ENCODE measurements at regions of chr9 and their contacts with region 1.

Region 1: GRCh38 chr9:129737479-129738274 is 15.2 kb downstream of the PTGES start:
- DNase-seq: peak; percentile 76 to 93 (median 85)
- ATAC-seq: peak; percentile 92
- H3K4me3 ChIP-seq: peak overlapping the region; percentile 76
- H3K4me3 Mint-ChIP-seq: peak overlapping the region; percentile 69
- H3K27ac ChIP-seq: peak overlapping the region; percentile 13 to 59
- H3K27ac Mint-ChIP-seq: peak overlapping the region; percentile 24
- H3K4me1 ChIP-seq: peaks cover 16% of the 10 kb centered on the region
- H3K4me1 Mint-ChIP-seq: no peaks in the 10 kb centered on the region
- H3K27me3 ChIP-seq: peaks cover 0 to 4% of the 10 kb centered on the region in 2 experiments
- H3K27me3 Mint-ChIP-seq: peaks cover 4% of the 10 kb centered on the region
- CTCF ChIP-seq: peak; percentile 96

Region 2: GRCh38 chr9:129641746-129642513 is 95.7 kb before region 1 on chr9 and contains the start of gene ASB6:
- CTCF ChIA-PET with region 1: no interaction called
- POLR2A ChIA-PET with region 1: no interaction called
- intact Hi-C with region 1: loop called in 1 of 2 experiments (anchors 5 kb)
- DNase-seq: peak; percentile 78 to 94 (median 89)
- ATAC-seq: peak; percentile 71
- H3K4me3 ChIP-seq: peak within 1 kb of the TSS; percentile 98
- H3K4me3 Mint-ChIP-seq: peak within 1 kb of the TSS; percentile 87
- H3K27ac ChIP-seq: peak within 1 kb of the TSS; percentile 66 to 74
- H3K27ac Mint-ChIP-seq: peak within 1 kb of the TSS; percentile 85
- H3K4me1 ChIP-seq: peaks cover 35% of the 10 kb centered on the region
- H3K4me1 Mint-ChIP-seq: peaks cover 11% of the 10 kb centered on the region
- H3K27me3 ChIP-seq: no peaks in the 10 kb centered on the region
- H3K27me3 Mint-ChIP-seq: no peaks in the 10 kb centered on the region
- CTCF ChIP-seq: peak; percentile 100
- total RNA-seq, gene ASB6: 28.5 to 29.3 TPM

Region 3: DNA sequence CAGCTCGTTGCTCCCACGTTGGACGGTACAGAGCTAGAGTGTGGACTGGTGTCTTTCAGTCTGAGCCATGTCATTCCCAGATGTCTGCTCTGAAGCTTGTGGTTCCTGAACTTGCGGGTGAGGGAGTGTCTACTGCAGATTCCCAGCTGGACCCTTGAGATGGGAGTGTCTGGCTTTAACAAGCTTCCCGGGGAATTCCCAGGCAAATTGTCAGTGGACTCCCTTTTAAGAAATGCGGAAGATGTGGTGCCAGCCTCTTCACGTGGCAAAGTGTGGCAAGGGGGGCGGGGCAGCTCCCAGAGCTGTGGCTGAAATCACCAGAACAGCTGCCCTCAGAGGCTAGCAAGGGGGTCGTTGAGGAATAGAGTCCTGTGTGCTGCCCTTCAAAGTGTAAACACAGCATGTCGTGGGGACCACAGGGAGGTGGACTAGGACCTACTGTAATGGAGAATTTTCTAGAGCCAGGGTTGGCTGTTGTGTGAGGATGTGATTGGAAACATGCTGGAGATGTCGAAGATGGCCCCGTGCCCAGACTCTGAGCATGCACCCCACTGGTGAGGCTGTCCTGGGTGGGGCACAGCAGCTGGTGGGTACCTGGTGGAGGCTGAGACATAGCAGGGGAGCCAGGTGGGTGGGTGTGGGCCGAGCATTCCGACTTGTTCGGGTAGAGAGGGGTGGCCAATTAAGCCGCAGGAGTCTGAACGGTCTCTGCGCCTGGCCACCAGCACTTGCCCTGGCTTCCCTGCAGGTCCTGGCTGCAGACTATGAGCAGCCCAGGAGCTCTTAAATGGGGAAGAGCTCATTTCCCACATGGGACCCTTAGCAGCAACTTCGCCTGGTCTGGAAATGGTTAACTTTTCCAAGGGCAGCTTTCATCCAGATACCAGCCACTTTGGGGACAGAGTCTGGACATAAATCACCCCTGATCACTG is 34.8 kb before region 1 on chr9:
- CTCF ChIA-PET with region 1: no interaction called
- POLR2A ChIA-PET with region 1: no interaction called
- intact Hi-C with region 1: no loop called
- DNase-seq: no peak
- ATAC-seq: no peak
- H3K4me3 ChIP-seq: no peak overlapping the region
- H3K4me3 Mint-ChIP-seq: no peak overlapping the region
- H3K27ac ChIP-seq: no peak overlapping the region
- H3K27ac Mint-ChIP-seq: no peak overlapping the region
- H3K4me1 ChIP-seq: no peaks in the 10 kb centered on the region
- H3K4me1 Mint-ChIP-seq: no peaks in the 10 kb centered on the region
- H3K27me3 ChIP-seq: peaks cover 12 to 16% of the 10 kb centered on the region in 2 experiments
- H3K27me3 Mint-ChIP-seq: peaks cover 37% of the 10 kb centered on the region
- CTCF ChIP-seq: no peak

Region 4: DNA sequence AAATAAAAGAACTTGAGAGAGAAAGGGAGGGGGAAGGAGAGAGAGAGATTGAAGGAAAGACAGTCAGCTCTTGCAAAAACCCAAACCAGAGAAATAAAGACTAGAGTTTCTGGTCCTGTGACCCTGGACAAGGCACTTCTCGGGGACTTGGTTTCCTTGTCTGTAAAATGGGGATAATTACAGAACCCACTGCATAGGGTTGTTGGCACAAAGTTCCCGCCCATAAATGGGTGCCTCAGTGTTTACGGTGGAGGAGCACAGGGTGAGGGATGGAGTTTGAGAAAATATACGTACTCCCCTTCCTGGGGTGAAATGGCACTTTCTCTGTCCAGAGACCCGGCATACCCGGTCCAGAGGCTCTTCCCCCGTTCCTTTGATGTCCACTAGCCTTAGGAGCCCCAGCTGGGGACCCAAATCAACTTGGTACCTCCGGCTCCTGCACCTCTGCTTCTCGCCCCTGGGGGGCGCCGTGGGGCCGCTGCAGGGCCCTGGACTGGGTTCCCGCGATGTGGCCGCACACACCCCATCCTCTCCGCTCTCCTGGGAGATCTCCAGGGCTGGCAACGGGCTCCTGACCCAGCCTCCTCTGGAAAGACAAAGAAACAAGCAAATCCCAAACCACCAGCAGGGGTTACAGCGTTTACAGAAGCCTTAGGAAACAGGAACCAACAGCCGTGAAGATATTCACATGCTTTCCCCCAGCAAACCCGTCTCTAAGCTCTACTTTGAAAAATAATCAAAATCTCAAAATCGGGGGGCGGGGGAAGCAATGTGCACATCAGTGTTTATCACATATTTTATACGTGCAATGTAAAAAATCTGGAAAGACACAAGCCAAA is 11.1 kb before region 1 on chr9:
- CTCF ChIA-PET with region 1: interaction called, 24 read pairs
- POLR2A ChIA-PET with region 1: interaction called, 7 read pairs
- intact Hi-C with region 1: no loop called
- DNase-seq: peak; percentile 31 to 77 (median 48)
- ATAC-seq: peak; percentile 94
- H3K4me3 ChIP-seq: no peak overlapping the region
- H3K4me3 Mint-ChIP-seq: no peak overlapping the region
- H3K27ac ChIP-seq: no peak overlapping the region
- H3K27ac Mint-ChIP-seq: no peak overlapping the region
- H3K4me1 ChIP-seq: peaks cover 7% of the 10 kb centered on the region
- H3K4me1 Mint-ChIP-seq: peaks cover 4% of the 10 kb centered on the region
- H3K27me3 ChIP-seq: peaks cover 0 to 7% of the 10 kb centered on the region in 2 experiments
- H3K27me3 Mint-ChIP-seq: peaks cover 8% of the 10 kb centered on the region
- CTCF ChIP-seq: peak; percentile 76

Region 5: DNA sequence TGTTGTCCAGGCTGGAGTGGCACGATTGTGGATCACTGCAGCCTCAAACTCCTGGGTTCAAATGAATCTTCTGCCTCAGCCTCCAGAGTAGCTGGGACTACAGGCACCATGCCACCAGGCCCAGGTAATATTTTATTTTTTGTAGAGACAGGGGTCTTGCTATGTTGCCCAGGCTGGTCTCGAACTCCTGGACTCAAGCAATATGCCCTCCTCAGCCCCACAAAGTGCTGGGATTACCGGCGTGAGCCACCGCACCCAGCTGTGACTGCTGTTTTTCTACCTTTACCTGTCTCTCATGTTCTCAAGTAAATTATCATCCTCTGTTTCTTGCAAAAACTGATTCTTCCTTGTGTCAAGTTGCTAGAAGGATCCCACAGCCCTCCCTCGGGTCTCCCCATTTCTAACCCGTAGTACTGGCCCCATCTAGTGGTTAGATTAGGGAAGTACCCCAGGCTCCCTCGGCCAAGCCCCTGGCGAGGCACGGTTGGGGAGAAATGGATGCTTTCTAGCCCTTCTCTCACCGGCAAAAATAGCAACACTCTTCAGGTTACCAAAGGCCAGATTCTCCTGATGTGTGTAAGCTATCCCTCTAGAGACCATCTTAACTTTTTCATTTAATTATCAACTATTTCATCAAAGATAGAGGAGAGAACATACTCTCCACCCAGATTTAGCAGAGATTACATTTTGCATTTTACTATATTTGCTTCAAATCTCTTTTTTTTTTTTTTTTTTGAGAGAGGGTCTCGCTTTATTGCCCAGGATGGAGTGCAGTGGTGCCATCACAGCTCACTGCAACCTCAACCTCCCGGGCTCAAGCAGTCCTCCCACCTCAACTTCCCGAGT is 46.1 kb after region 1 on chr9:
- CTCF ChIA-PET with region 1: interaction called, 19 read pairs
- POLR2A ChIA-PET with region 1: interaction called, 4 read pairs
- intact Hi-C with region 1: loop called (anchors 1 kb)
- DNase-seq: peak; percentile 55 to 84 (median 68)
- ATAC-seq: peak; percentile 100
- H3K4me3 ChIP-seq: no peak overlapping the region
- H3K4me3 Mint-ChIP-seq: no peak overlapping the region
- H3K27ac ChIP-seq: no peak overlapping the region
- H3K27ac Mint-ChIP-seq: no peak overlapping the region
- H3K4me1 ChIP-seq: peaks cover 5% of the 10 kb centered on the region
- H3K4me1 Mint-ChIP-seq: peaks cover 5% of the 10 kb centered on the region
- H3K27me3 ChIP-seq: peaks cover 0 to 2% of the 10 kb centered on the region in 2 experiments
- H3K27me3 Mint-ChIP-seq: peaks cover 8% of the 10 kb centered on the region
- CTCF ChIP-seq: peak; percentile 89

Region 6: GRCh38 chr9:129796029-129796910 is 58.6 kb after region 1 on chr9:
- CTCF ChIA-PET with region 1: no interaction called
- POLR2A ChIA-PET with region 1: no interaction called
- intact Hi-C with region 1: loop called in 1 of 2 experiments (anchors 2 kb)
- DNase-seq: no peak
- ATAC-seq: no peak
- H3K4me3 ChIP-seq: no peak overlapping the region
- H3K4me3 Mint-ChIP-seq: no peak overlapping the region
- H3K27ac ChIP-seq: no peak overlapping the region
- H3K27ac Mint-ChIP-seq: no peak overlapping the region
- H3K4me1 ChIP-seq: no peaks in the 10 kb centered on the region
- H3K4me1 Mint-ChIP-seq: no peaks in the 10 kb centered on the region
- H3K27me3 ChIP-seq: no peaks in the 10 kb centered on the region
- H3K27me3 Mint-ChIP-seq: no peaks in the 10 kb centered on the region
- CTCF ChIP-seq: no peak

Region 7: DNA sequence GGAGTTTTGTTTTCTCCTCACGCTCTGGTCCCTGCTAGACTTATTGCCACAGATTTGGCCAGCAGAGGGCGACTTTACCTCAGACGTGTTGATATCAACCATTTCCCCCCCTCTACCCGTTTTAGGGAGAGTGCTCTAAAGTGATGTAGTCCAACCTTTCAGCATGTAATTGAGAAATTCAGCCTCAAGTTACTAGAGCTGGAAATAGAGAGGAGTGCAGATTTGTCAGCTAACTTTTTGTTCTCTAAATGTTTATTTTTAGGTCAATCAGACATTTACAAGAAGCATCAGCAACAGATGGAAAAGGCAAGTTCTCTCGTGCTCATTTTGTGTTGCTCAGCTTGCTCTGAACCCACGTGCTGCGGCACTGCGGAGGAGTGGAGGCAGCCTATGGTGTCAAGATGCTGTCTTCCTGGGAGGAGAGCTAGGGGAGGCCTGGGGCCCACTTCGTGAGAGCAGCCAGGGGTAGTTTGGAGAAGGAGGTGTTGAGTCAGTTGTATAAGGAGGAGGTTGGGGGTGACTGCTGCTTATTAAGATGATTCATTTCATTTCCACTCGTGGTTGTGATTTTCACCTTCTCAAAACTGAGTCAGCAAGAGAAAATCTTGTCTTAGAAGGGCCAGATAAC is 369.7 kb after region 1 on chr9:
- CTCF ChIA-PET with region 1: no interaction called
- POLR2A ChIA-PET with region 1: no interaction called
- intact Hi-C with region 1: loop called in 1 of 2 experiments (anchors 5 kb)
- DNase-seq: peak; percentile 71 to 92 (median 84)
- ATAC-seq: peak; percentile 90
- H3K4me3 ChIP-seq: no peak overlapping the region
- H3K4me3 Mint-ChIP-seq: no peak overlapping the region
- H3K27ac ChIP-seq: no peak overlapping the region
- H3K27ac Mint-ChIP-seq: peak overlapping the region; percentile 7
- H3K4me1 ChIP-seq: peaks cover 10% of the 10 kb centered on the region
- H3K4me1 Mint-ChIP-seq: peaks cover 19% of the 10 kb centered on the region
- H3K27me3 ChIP-seq: no peaks in the 10 kb centered on the region
- H3K27me3 Mint-ChIP-seq: no peaks in the 10 kb centered on the region
- CTCF ChIP-seq: peak; percentile 89

Region 8: DNA sequence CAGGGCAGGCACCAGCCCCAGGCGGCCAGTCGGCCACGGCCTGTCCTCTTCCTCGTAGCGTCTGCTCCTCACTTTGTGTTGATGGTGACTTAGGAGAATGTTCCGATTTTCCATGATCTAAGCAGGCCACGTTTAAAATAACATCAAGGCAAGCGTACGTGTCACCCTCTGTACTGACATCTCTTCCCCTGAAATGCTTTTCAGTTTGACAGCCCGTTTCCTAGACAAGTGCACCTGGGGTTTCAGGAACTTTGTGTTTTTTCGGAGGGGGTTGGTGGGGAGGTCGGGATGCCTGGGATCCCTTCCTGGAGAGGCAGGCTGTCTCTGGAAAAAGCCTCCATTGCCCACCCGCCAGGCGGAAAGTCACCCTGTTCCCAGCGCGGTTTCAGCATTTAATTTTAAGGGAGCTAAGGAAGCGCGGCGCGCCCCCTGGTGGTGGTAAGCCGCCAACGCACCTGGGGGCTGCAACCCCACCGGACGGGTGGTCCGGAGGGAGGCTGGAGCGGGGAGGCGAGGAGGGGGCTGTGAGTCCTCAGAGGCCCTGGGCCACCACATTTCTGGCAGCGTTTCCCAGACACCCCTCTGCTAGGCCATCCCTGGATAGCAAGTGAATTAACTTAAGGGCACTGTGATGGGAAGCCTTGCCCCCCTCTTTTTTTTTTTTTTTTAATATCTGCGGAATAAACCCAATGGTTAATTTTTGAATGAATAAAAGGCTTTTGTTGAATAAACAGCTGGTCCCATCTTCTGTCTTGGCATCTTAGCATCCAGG is 498.4 kb after region 1 on chr9:
- CTCF ChIA-PET with region 1: no interaction called
- POLR2A ChIA-PET with region 1: no interaction called
- intact Hi-C with region 1: loop called in 1 of 2 experiments (anchors 2 kb)
- DNase-seq: peak; percentile 52 to 82 (median 64)
- ATAC-seq: peak; percentile 40
- H3K4me3 ChIP-seq: no peak overlapping the region
- H3K4me3 Mint-ChIP-seq: peak overlapping the region; percentile 34
- H3K27ac ChIP-seq: no peak overlapping the region
- H3K27ac Mint-ChIP-seq: no peak overlapping the region
- H3K4me1 ChIP-seq: peaks cover 30% of the 10 kb centered on the region
- H3K4me1 Mint-ChIP-seq: peaks cover 22% of the 10 kb centered on the region
- H3K27me3 ChIP-seq: no peaks in the 10 kb centered on the region
- H3K27me3 Mint-ChIP-seq: no peaks in the 10 kb centered on the region
- CTCF ChIP-seq: peak; percentile 98